OCI-LY7 (cell line): ENCODE measurements at regions of chr7 and their contacts with region 1.

Region 1: GRCh38 chr7:70693686-70694360 is 438.1 kb upstream of the GALNT17 start:
- DNase-seq: peak; percentile 81
- H3K4me3 ChIP-seq: peak overlapping the region; percentile 79
- H3K27ac ChIP-seq: no peak overlapping the region
- H3K4me1 ChIP-seq: peaks cover 23% of the 10 kb centered on the region
- CTCF ChIP-seq: no peak

Region 2: DNA sequence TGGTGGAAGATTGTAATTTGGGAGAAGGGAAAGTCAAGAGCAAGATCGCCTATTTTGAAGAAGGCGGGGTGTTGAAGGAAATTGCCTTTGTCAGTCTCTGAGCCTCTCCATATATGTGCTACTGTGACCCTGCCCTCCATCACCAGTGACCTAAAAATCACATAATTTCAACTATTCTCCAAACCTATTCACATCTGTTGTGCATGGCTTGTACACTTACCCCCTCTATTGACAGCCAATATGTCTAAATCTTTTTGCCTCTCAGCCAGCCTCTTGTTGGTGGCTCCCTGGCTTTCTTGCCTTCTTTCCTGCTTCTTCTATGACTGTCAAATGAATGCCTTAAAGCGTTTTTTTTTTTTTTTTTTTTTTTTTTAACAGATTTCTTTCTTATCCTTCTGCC is 799.9 kb before region 1 on chr7:
- CTCF ChIA-PET with region 1: no interaction called
- POLR2A ChIA-PET with region 1: no interaction called
- intact Hi-C with region 1: loop called (anchors 5 kb)
- DNase-seq: peak; percentile 67
- H3K4me3 ChIP-seq: no peak overlapping the region
- H3K27ac ChIP-seq: peak overlapping the region; percentile 20
- H3K4me1 ChIP-seq: peaks cover 83% of the 10 kb centered on the region
- CTCF ChIP-seq: peak; percentile 76

Region 3: GRCh38 chr7:70040970-70041766 is 652.7 kb before region 1 on chr7:
- CTCF ChIA-PET with region 1: no interaction called
- POLR2A ChIA-PET with region 1: no interaction called
- intact Hi-C with region 1: loop called (anchors 5 kb)
- DNase-seq: peak; percentile 28
- H3K4me3 ChIP-seq: no peak overlapping the region
- H3K27ac ChIP-seq: no peak overlapping the region
- H3K4me1 ChIP-seq: peaks cover 12% of the 10 kb centered on the region
- CTCF ChIP-seq: peak; percentile 82

Region 4: GRCh38 chr7:70193514-70193913 is 500.3 kb before region 1 on chr7:
- CTCF ChIA-PET with region 1: no interaction called
- POLR2A ChIA-PET with region 1: interaction called, 5 read pairs
- intact Hi-C with region 1: loop called (anchors 1 kb)
- DNase-seq: peak; percentile 70
- H3K4me3 ChIP-seq: no peak overlapping the region
- H3K27ac ChIP-seq: no peak overlapping the region
- H3K4me1 ChIP-seq: peaks cover 4% of the 10 kb centered on the region
- CTCF ChIP-seq: peak; percentile 80

Region 5: DNA sequence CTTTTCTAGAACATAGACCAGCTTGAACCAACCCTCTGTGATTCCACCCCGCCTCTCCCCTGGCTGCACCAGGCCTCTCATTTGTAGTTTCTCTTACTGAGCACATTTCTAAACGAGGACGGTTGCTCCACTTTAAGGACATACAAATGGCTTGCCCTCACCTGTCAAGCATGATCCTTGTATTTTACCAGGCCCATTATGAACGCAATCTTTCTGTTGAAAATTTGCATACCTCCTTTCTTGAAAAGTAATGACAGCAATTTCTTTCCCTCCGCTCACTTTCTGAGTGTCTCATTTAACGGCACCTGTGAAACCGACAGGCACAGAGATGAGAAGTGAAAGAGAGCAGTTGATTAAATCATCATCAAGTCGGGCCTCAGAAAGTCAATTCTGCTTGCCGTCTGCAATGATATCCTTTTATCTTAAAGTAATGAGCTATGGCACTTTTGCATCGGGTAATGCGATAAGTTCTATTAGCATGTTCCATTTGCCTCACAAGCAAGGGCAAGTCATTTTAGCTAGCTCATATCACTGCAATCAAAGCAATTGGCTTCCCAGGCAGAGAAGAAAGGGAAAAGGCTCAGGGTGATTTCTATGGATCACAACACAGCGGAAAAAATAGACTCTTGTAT is 267.5 kb before region 1 on chr7:
- CTCF ChIA-PET with region 1: no interaction called
- POLR2A ChIA-PET with region 1: interaction called, 4 read pairs
- intact Hi-C with region 1: loop called (anchors 2 kb)
- DNase-seq: peak; percentile 90
- H3K4me3 ChIP-seq: peak overlapping the region; percentile 46
- H3K27ac ChIP-seq: peak overlapping the region; percentile 91
- H3K4me1 ChIP-seq: peaks cover 57% of the 10 kb centered on the region
- CTCF ChIP-seq: no peak

Region 6: GRCh38 chr7:70595753-70596597 is 97.8 kb before region 1 on chr7:
- CTCF ChIA-PET with region 1: no interaction called
- POLR2A ChIA-PET with region 1: no interaction called
- intact Hi-C with region 1: no loop called
- DNase-seq: no peak
- H3K4me3 ChIP-seq: peak overlapping the region; percentile 37
- H3K27ac ChIP-seq: no peak overlapping the region
- H3K4me1 ChIP-seq: no peaks in the 10 kb centered on the region
- CTCF ChIP-seq: no peak

Region 7: DNA sequence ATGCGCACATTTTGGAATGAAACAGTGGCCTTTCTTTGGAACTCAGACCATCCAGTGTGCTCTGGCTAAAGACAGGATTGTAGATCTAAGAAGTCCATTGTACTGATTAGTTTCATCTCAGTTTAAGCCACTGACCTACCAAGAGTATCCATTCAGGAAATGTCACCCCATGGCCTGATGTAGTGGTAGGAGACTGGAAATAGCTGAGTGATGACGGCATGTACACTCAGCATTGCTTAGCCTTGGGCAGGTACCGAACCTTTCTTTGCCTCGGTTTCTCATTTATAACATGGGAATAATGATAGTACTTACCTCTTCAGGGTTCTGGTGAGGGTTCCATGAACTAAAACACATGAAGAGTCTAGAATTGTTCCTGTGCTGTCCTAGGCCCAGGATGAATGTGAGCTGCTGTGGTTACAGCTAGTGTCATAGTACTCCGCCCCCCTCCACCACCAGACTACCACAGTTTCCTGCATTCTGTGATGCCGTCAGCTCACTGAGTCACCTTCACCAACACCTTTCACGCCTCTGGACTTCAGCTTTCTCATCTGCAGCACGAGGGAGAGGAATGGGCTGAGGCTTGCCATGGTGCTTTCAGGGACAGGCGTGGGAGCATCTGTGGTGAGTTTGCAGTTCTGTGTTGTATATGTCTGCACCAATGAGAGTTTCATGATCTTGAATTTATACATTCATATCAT is 45.9 kb before region 1 on chr7:
- CTCF ChIA-PET with region 1: no interaction called
- POLR2A ChIA-PET with region 1: no interaction called
- intact Hi-C with region 1: no loop called
- DNase-seq: no peak
- H3K4me3 ChIP-seq: no peak overlapping the region
- H3K27ac ChIP-seq: no peak overlapping the region
- H3K4me1 ChIP-seq: no peaks in the 10 kb centered on the region
- CTCF ChIP-seq: no peak

Region 8: DNA sequence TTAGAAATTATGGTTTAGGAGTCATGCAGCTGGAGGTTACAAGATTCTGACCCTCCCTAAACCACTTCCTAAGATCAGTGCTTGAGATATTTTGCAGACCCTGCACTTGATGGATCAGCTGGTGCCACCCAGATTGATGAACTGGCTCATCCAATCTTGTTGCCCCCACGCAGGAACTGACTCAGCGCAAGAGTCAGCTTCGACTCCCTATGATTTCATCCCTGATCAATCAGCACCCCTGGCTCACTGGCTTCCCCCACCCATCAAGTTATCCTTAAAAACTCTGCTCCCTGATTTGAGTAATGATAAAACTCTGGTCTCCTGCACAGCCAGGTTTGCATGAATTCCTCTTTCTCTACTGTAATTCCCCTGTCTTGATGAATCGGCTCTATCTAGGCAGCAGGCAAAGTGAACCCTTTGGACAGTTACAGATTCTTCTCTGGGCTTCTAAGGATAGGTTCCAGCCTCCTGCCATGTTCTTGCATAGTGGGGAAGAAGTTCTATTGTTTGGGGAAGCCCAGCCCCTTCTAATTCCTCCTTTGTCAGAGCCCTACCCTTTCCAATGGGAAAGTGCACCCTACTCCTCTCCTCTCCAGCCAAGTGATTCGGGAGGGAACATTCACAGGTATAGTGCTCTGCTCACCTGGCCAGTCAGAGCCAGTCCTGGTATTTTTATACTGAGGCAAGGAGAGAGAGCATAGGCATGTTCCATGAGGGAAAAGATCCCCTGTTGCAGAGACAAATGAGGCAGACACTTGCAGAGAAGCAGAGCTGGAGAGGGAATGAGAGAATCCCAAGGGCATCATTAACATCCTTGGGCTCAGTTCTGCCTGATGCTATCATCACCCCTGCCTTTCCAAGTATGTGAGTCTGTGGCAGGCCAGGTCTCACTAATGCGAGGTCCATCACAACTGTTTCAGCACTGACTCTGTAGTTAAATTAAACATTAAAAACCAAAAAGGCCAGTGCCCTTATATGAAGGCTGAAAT is 213.7 kb after region 1 on chr7:
- CTCF ChIA-PET with region 1: no interaction called
- POLR2A ChIA-PET with region 1: no interaction called
- intact Hi-C with region 1: no loop called
- DNase-seq: no peak
- H3K4me3 ChIP-seq: no peak overlapping the region
- H3K27ac ChIP-seq: no peak overlapping the region
- H3K4me1 ChIP-seq: no peaks in the 10 kb centered on the region
- CTCF ChIP-seq: no peak